ENCODE measurements at regions of chr19 and their contacts with region 1.

Region 1: DNA sequence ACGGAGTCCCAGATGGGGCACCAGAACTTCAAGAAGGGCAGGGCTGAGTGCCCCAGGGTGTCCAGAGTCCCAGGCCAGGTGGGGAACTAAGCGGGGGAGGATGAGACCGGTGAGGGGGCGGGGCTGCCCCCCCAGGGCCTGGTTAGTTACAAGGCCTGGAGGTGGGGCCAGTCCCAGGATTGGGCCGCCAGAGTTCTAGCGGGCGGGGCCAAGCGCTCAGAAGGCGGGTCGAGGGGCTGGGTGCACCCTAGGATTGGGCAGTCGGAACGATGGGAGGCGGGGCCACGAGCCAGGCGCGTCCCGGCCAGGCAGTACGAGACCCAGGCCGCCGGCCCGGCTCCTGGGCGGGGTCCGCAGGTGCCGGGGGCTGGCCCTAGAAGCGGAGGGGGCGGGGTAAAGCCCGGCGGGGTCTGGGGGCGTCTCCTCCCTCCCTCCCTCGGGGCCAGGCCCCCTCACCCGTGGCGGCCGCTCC is 571 bp downstream of the ZNF653 start:
- DNase-seq: peak; percentile 93 to 99 (median 97)
- H3K4me3 ChIP-seq: peak overlapping the region; percentile 61 to 99 (median 89)
- H3K27ac ChIP-seq: peak overlapping the region; percentile 66 to 98 (median 95)
- H3K27me3 ChIP-seq: no peaks in the 10 kb centered on the region
- CTCF ChIP-seq: peak in 7 of 56 donors; percentile 8 to 22 (median 15)

Region 2: DNA sequence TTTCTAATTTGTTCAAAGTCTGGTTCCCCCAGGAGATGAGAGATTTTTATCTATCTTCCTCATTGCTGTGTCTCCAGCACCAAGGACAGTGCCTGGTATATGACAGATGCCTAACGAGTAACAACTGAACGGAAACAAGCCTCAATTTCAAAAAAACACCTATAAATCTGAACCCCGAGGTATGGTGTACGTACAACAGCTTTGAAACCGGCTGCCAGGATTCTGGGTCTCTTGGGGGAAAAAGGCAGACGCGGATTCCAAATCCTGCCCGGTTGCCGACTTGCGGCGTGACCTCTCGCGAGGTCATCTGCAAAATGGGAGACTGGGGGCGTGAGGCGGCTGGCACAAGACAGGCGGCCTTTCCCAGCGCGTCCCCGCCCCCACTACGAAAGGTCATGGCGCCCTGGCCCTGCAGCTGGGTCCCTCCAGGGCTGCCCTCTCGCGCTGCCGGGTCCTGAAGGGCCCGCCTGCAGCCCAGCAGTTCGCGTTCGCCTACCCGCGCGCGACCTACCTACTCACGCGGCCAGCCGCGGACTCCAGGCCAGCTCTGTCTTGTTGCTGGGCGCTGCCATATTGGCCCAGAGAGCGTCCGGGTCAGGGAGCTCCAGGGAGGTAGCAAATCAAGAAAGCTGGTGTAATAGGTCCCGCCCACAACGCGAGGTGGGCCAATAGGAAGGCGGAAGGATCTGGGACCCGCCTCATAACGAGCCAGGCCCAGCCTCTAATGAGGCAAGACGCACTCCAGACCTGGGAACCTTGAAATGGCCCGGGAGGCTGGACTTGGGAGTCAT is 23.7 kb after region 1 on chr19 and contains the start of gene ECSIT:
- intact Hi-C with region 1: loop called in 1 of 2 experiments (anchors 2 kb)
- DNase-seq: peak; percentile 91 to 99 (median 98)
- H3K4me3 ChIP-seq: peak within 1 kb of the TSS; percentile 53 to 100 (median 87)
- H3K27ac ChIP-seq: peak within 1 kb of the TSS; percentile 69 to 98 (median 90)
- H3K27me3 ChIP-seq: no peaks in the 10 kb centered on the region
- CTCF ChIP-seq: peak in 27 of 56 donors; percentile 1 to 56 (median 23)
- total RNA-seq, gene ECSIT: 46.5 to 84.8 (median 66.3) TPM

Region 3: DNA sequence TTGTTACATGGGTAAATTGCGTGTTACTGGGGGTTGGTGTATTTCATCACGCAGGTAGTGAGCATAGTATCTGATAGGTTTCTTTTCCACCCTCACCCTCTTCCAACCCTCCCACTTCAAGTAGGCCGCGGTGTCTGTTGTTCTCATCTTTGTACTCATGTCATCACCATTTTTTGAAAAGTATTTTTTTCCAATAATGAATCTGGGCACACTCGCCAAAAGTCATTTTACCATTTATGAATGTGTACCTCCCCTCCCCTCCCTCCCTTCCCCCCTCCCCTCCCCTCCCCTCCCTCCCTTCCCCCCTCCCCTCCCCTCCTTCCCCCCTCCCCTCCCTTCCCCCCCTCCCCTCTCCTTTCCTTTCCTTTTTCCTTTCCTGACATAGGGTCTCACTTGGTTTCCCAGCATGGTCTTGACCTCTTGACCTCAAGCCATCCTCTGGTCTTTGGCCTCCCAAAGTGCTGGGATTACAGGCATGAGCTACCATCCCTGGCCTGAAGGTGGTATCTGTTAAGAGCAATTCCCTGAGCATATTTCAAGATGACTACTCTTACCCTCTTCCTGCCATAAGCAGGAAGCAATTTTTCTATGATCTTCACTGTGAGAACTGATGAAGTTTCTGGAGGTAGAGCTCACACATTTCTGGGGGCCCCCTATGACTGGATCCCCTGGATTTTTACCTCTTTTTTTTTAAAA is 107.9 kb after region 1 on chr19:
- intact Hi-C with region 1: no loop called
- DNase-seq: no peak
- H3K4me3 ChIP-seq: no peak overlapping the region
- H3K27ac ChIP-seq: no peak overlapping the region
- H3K27me3 ChIP-seq: no peaks in the 10 kb centered on the region
- CTCF ChIP-seq: no peak

Region 4: GRCh38 chr19:11673608-11674041 is 168.6 kb after region 1 on chr19:
- intact Hi-C with region 1: no loop called
- DNase-seq: peak in 9 of 10 donors; percentile 51 to 78 (median 64)
- H3K4me3 ChIP-seq: peak overlapping the region; percentile 36 to 84 (median 62)
- H3K27ac ChIP-seq: peak overlapping the region in 2 of 59 donors; percentile 53 to 61
- H3K27me3 ChIP-seq: peaks cover 0 to 6% (median 0%) of the 10 kb centered on the region in 45 donors
- CTCF ChIP-seq: peak; percentile 48 to 92 (median 76)

Measured in dorsolateral prefrontal cortex (tissue), 120 donors.